ENCODE measurements at regions of chr13 and their contacts with region 1.

Region 1: DNA sequence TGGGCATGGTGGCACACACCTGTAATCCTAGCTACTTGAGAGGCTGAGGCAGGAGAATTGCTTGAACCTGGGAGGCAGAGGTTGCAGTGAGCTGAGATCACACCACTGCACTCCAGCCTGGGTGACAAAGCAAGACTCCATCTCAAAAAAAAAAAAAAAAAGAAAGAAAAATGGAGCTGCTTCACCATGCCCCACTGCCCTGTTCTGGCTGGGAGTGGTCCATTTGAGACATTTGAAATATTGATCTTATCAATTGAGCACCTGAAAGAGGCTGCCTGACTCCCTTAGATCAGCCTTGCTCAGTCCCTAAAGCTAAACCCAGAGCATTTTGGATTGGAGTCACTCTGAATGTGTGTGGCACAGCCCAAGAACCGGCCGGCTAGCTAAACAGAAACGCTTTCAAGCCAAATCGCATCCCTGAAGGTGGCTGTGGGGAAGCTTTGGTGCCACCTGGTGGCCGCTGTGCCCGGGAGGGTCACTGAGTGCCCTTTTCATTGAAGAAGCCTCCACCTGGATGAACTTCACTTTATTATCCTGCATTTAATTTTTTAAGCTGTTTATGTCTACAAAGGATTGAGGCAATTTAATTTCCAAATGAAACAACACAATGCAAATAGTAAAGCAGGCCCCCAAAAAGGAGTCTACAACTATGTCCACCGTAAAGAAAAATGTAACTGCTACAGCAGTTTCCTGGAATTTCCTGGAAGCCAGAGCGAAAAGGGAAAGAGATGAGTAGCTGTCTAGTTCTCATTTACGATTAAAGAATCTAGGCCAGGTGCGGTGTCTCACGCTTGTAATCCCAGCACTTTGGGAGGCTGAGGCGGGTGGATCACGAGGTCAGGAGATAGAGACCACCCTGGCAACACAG is 53.1 kb upstream of the SERPINE3 start:
- DNase-seq: peak; percentile 76
- H3K4me3 Mint-ChIP-seq: no peak overlapping the region
- H3K27ac Mint-ChIP-seq: no peak overlapping the region
- H3K4me1 Mint-ChIP-seq: no peaks in the 10 kb centered on the region
- H3K27me3 Mint-ChIP-seq: no peaks in the 10 kb centered on the region
- CTCF ChIP-seq: peak; percentile 85

Region 2: GRCh38 chr13:51125498-51126226 is 160.7 kb before region 1 on chr13:
- CTCF ChIA-PET with region 1: interaction called, 145 read pairs
- POLR2A ChIA-PET with region 1: interaction called, 3 read pairs
- intact Hi-C with region 1: loop called (anchors 1 kb)
- DNase-seq: peak; percentile 70
- H3K4me3 Mint-ChIP-seq: no peak overlapping the region
- H3K27ac Mint-ChIP-seq: no peak overlapping the region
- H3K4me1 Mint-ChIP-seq: no peaks in the 10 kb centered on the region
- H3K27me3 Mint-ChIP-seq: peaks cover 32% of the 10 kb centered on the region
- CTCF ChIP-seq: peak; percentile 76

Region 3: DNA sequence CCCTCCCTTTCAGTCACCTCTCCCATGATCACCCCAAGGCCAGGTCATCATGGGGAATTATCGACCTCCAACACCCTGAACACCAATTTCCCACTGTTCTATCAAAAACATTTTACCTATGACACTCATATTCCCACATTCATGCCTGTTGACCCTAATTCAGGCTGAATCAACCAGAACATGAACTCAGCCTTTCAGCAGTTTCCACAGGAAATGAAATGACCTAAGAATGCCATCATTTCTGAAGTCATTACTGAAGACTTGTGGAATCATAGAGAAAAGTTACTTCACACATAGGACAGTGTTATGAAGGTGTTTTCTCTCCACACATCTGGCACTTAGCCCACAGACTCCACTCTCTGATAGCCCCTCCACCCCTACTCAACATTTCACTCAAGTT is 94.0 kb before region 1 on chr13:
- CTCF ChIA-PET with region 1: interaction called, 10 read pairs
- POLR2A ChIA-PET with region 1: no interaction called
- intact Hi-C with region 1: no loop called
- DNase-seq: no peak
- H3K4me3 Mint-ChIP-seq: no peak overlapping the region
- H3K27ac Mint-ChIP-seq: no peak overlapping the region
- H3K4me1 Mint-ChIP-seq: no peaks in the 10 kb centered on the region
- H3K27me3 Mint-ChIP-seq: peaks cover 88% of the 10 kb centered on the region
- CTCF ChIP-seq: no peak

Region 4: DNA sequence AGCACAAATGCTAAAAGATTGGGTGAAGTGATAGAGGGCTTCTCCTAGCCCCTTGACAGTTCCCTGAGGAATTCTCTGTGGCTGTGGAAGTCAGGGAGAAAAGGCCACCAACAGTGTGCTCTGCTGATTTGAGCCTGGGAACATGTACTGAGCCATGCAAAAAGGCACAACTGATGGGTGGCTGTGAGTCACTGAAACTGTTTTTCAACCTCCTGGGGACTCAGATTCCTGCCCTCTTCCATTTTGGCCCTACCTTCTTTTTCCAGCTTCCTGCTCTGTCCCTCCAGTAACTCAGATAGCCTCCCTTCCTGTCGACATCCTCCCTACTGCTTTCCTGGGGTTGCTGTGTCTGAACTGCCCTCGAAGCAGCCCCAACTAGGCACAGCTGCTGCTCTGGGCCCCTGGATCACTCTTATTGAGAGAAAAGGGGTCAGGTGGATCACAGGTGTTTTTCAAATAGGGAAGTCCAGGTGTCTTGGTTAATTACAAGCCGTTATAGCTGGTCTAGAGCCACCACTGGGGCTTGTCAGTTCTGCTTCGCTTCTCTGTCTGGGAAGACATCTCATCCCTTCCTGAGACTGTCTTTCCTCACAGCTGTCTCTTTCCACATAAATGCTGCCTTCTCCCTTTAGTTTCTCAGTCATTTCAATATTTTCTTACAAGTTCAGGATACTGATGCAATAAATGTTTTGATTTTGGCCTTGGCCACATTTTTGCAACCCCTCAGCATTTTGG is 50.4 kb before region 1 on chr13:
- CTCF ChIA-PET with region 1: interaction called, 10 read pairs
- POLR2A ChIA-PET with region 1: no interaction called
- intact Hi-C with region 1: no loop called
- DNase-seq: no peak
- H3K4me3 Mint-ChIP-seq: no peak overlapping the region
- H3K27ac Mint-ChIP-seq: no peak overlapping the region
- H3K4me1 Mint-ChIP-seq: peaks cover 6% of the 10 kb centered on the region
- H3K27me3 Mint-ChIP-seq: peaks cover 9% of the 10 kb centered on the region
- CTCF ChIP-seq: no peak

Region 5: GRCh38 chr13:51297556-51297955 is 11.2 kb after region 1 on chr13:
- CTCF ChIA-PET with region 1: interaction called, 23 read pairs
- POLR2A ChIA-PET with region 1: no interaction called
- intact Hi-C with region 1: no loop called
- DNase-seq: no peak
- H3K4me3 Mint-ChIP-seq: no peak overlapping the region
- H3K27ac Mint-ChIP-seq: no peak overlapping the region
- H3K4me1 Mint-ChIP-seq: no peaks in the 10 kb centered on the region
- H3K27me3 Mint-ChIP-seq: no peaks in the 10 kb centered on the region
- CTCF ChIP-seq: no peak

Region 6: DNA sequence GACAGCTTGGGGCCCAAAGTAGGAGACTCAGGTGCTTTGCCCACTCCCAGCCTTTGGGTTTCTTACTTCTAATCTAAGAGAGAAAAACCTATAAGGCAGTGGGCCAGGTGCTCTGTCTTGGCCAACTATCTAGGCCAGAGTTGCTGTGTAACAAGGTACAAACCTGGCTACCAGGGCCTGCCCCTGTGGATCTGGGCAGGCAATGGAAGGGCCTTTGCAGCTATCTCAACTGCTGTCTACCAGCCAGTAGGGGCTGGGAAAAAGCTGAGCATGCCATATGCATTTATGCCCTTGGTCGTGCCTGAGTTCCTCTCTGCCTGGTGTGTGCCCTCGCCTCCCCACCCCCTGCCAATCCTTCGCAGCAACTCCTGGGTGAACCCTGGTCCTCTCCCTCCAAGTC is 36.5 kb after region 1 on chr13:
- CTCF ChIA-PET with region 1: interaction called, 12 read pairs
- POLR2A ChIA-PET with region 1: interaction called, 3 read pairs
- intact Hi-C with region 1: no loop called
- DNase-seq: no peak
- H3K4me3 Mint-ChIP-seq: no peak overlapping the region
- H3K27ac Mint-ChIP-seq: no peak overlapping the region
- H3K4me1 Mint-ChIP-seq: no peaks in the 10 kb centered on the region
- H3K27me3 Mint-ChIP-seq: no peaks in the 10 kb centered on the region
- CTCF ChIP-seq: no peak